ENCODE measurements at regions of chr3 and their contacts with region 1.

Region 1: GRCh38 chr3:8482960-8483665 is 18.5 kb upstream of the LMCD1 start:
- DNase-seq: peak; percentile 97
- ATAC-seq: peak; percentile 99
- H3K4me3 ChIP-seq: no peak overlapping the region
- H3K27ac ChIP-seq: 0 out of 2 replicates have a peak overlapping the region, but pooled peaks have one; percentile 4
- H3K4me1 ChIP-seq: peaks cover 13% of the 10 kb centered on the region
- H3K27me3 ChIP-seq: no peaks in the 10 kb centered on the region
- CTCF ChIP-seq: no peak

Region 2: DNA sequence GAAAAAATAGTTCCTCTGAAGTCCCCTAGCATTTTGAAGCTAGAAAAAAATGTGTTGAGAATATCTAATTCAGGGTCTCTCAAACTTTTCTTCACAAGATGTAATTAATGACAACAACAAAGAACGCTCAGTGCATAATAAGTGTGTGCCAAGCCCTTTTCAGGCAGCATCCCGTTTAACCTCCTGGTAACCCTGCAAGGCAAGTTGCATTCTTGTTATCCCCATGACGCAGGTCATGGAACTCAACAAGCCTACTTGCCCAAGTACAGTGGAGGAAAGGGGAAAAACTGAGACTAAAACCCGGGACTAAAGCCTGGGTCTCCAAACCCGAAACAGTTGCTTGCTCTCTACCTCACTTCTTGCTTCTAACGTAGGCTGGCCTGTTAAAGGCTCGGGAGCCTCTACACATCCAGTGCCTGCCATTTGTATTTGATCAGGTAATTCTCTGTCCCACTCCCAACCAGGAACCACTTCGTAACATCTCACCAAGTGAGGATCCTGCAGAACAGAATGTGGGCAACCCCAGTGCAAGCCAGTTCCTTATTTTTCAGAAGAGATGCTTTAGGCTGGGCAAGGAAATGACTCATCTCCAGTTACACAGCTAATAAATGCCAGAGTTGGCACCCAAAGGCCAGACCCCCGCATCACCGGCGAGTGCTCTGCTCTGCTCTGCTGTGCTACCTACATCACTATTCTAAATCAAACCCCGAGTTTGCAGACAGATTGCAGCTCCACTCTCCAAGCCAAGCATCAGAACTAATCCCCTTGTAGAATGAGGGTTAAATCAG is 46.8 kb after region 1 on chr3:
- CTCF ChIA-PET with region 1: no interaction called
- POLR2A ChIA-PET with region 1: no interaction called
- intact Hi-C with region 1: loop called (anchors 1 kb)
- DNase-seq: peak; percentile 77
- ATAC-seq: peak; percentile 88
- H3K4me3 ChIP-seq: peak overlapping the region; percentile 17; the same call in 1 of the 2 replicates
- H3K27ac ChIP-seq: peak overlapping the region; percentile 48
- H3K4me1 ChIP-seq: peaks cover 49% of the 10 kb centered on the region
- H3K27me3 ChIP-seq: no peaks in the 10 kb centered on the region
- CTCF ChIP-seq: no peak

Region 3: GRCh38 chr3:8607234-8608040 is 124.3 kb after region 1 on chr3:
- CTCF ChIA-PET with region 1: no interaction called
- POLR2A ChIA-PET with region 1: no interaction called
- intact Hi-C with region 1: loop called (anchors 1 kb)
- DNase-seq: peak; percentile 74
- ATAC-seq: peak; percentile 95
- H3K4me3 ChIP-seq: no peak overlapping the region
- H3K27ac ChIP-seq: no peak overlapping the region
- H3K4me1 ChIP-seq: 0 out of 2 replicates have a peak, but pooled peaks cover 6% of the 10 kb centered on the region
- H3K27me3 ChIP-seq: no peaks in the 10 kb centered on the region
- CTCF ChIP-seq: peak; percentile 80

Region 4: GRCh38 chr3:8622873-8623691 is 140.0 kb after region 1 on chr3:
- CTCF ChIA-PET with region 1: interaction called, 3 read pairs
- POLR2A ChIA-PET with region 1: no interaction called
- intact Hi-C with region 1: loop called (anchors 5 kb)
- DNase-seq: peak; percentile 76
- ATAC-seq: peak; percentile 89
- H3K4me3 ChIP-seq: no peak overlapping the region
- H3K27ac ChIP-seq: no peak overlapping the region
- H3K4me1 ChIP-seq: peaks cover 30% of the 10 kb centered on the region
- H3K27me3 ChIP-seq: no peaks in the 10 kb centered on the region
- CTCF ChIP-seq: peak; percentile 98

Measured in PC-3 (cell line).